CD4-positive, alpha-beta memory T cell (primary cell): ENCODE measurements at regions of chr11 and their contacts with region 1.

Region 1: GRCh38 chr11:20397281-20397680 is 9.8 kb downstream of the PRMT3 start:
- DNase-seq: peak; percentile 30 to 46 (median 38)
- H3K4me3 ChIP-seq: no peak overlapping the region
- H3K4me3 Mint-ChIP-seq: no peak overlapping the region
- H3K27ac ChIP-seq: no peak overlapping the region
- H3K27ac Mint-ChIP-seq: no peak overlapping the region
- H3K4me1 ChIP-seq: peaks cover 5% of the 10 kb centered on the region
- H3K4me1 Mint-ChIP-seq: peaks cover 5 to 8% (median 7%) of the 10 kb centered on the region in 4 donors
- H3K27me3 ChIP-seq: no peaks in the 10 kb centered on the region
- H3K27me3 Mint-ChIP-seq: no peaks in the 10 kb centered on the region

Region 2: DNA sequence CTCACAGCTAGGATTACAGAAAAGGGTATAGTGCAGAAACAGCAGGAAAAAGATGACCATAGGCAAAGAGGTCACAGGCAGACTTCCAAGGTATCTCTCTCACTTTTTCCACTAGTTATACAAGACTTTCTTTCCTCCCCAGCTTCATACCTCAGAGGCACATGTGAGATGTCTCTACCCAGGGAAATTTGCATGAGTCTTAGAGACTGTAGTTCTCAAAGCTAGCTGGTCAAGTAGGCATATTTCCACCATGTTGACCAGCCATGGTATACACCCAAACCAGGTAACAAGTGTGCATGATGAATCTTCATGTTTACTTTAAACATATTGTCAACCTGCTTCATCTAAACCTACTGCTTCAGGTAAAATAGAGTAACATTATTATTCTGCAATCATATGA is 18.2 kb after region 1 on chr11:
- CTCF ChIA-PET with region 1: interaction called, 13 read pairs
- POLR2A ChIA-PET with region 1: no interaction called
- intact Hi-C with region 1: no loop called
- DNase-seq: no peak
- H3K4me3 ChIP-seq: no peak overlapping the region
- H3K4me3 Mint-ChIP-seq: no peak overlapping the region
- H3K27ac ChIP-seq: no peak overlapping the region
- H3K27ac Mint-ChIP-seq: no peak overlapping the region
- H3K4me1 ChIP-seq: no peaks in the 10 kb centered on the region
- H3K4me1 Mint-ChIP-seq: peaks cover 0 to 8% (median 6%) of the 10 kb centered on the region in 4 donors
- H3K27me3 ChIP-seq: no peaks in the 10 kb centered on the region
- H3K27me3 Mint-ChIP-seq: no peaks in the 10 kb centered on the region

Region 3: DNA sequence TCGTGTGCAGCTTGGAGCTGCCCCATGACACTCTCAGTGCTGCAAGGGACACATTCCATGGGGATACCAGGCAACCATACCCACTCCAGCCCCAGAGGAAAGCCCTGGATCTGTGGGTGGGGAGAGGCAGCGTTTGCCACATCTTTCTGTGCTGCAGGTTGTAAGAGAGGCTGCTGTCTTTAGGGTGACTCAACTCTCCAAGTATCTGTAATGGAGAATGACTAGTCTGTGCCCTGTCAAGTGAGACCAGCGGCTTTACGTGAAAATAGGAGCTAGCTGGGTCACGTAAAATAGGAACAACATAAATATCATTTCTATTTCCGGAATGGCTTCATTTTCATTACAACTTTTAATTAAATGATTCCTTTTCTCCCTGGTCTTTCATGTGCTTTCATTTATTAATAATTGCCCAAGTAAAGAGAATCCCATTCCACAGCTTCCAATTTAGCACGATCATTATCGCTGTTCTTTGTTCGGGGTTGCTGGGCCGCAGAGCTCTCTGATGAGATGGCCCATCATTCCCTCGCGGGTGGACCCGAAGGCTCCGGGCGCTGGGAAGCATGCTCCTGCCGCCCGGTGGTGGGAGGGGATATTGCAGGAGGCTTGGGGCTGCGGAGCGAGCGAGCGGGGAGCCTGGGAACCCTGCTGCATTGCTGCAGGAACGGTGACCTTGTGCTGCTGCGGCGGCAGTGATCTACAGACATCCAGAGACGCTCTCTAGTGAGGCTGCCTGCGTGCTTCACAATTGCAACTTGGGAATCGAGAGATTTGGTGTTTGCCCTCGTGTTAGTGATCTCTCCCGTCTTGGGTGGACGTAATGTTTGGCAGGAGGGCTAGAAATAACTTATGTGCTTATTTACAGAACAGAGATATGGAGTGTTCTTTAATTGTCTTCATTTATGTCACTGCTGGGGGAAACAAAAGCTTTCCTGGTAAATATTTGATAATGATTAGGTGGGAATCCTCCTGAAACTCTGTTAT is 212.7 kb after region 1 on chr11:
- CTCF ChIA-PET with region 1: interaction called, 3 read pairs
- POLR2A ChIA-PET with region 1: no interaction called
- intact Hi-C with region 1: loop called (anchors 5 kb)
- DNase-seq: peak in 4 of 5 donors; percentile 19 to 38 (median 32)
- H3K4me3 ChIP-seq: no peak overlapping the region
- H3K4me3 Mint-ChIP-seq: peak overlapping the region in 6 of 8 donors; percentile 37 to 69 (median 56)
- H3K27ac ChIP-seq: no peak overlapping the region
- H3K27ac Mint-ChIP-seq: peak overlapping the region in 1 of 7 donors; percentile 45
- H3K4me1 ChIP-seq: no peaks in the 10 kb centered on the region
- H3K4me1 Mint-ChIP-seq: peaks cover 3 to 8% (median 8%) of the 10 kb centered on the region in 4 donors
- H3K27me3 ChIP-seq: peaks cover 28% of the 10 kb centered on the region
- H3K27me3 Mint-ChIP-seq: peaks cover 42 to 53% of the 10 kb centered on the region in 2 donors